Caco-2 (cell line): ENCODE measurements at regions of chr5 and their contacts with region 1.

Region 1: GRCh38 chr5:151002250-151002649 is 18.1 kb upstream of the GPX3 start:
- DNase-seq: peak in 1 of 2 experiments; percentile 44
- H3K4me3 ChIP-seq: no peak overlapping the region
- H3K4me3 Mint-ChIP-seq: no peak overlapping the region
- H3K27ac Mint-ChIP-seq: no peak overlapping the region
- H3K4me1 ChIP-seq: peaks cover 10% of the 10 kb centered on the region
- H3K4me1 Mint-ChIP-seq: peaks cover 14% of the 10 kb centered on the region
- H3K27me3 ChIP-seq: no peaks in the 10 kb centered on the region
- H3K27me3 Mint-ChIP-seq: no peaks in the 10 kb centered on the region
- CTCF ChIP-seq: peak; percentile 45 to 56

Region 2: GRCh38 chr5:150560401-150561193 is 441.7 kb before region 1 on chr5:
- CTCF ChIA-PET with region 1: no interaction called
- POLR2A ChIA-PET with region 1: no interaction called
- intact Hi-C with region 1: no loop called
- DNase-seq: peak; percentile 88 to 92
- H3K4me3 ChIP-seq: no peak overlapping the region
- H3K4me3 Mint-ChIP-seq: peak overlapping the region; percentile 53
- H3K27ac Mint-ChIP-seq: peak overlapping the region; percentile 78
- H3K4me1 ChIP-seq: peaks cover 21% of the 10 kb centered on the region
- H3K4me1 Mint-ChIP-seq: peaks cover 25% of the 10 kb centered on the region
- H3K27me3 ChIP-seq: no peaks in the 10 kb centered on the region
- H3K27me3 Mint-ChIP-seq: no peaks in the 10 kb centered on the region
- CTCF ChIP-seq: peak; percentile 83 to 93

Region 3: DNA sequence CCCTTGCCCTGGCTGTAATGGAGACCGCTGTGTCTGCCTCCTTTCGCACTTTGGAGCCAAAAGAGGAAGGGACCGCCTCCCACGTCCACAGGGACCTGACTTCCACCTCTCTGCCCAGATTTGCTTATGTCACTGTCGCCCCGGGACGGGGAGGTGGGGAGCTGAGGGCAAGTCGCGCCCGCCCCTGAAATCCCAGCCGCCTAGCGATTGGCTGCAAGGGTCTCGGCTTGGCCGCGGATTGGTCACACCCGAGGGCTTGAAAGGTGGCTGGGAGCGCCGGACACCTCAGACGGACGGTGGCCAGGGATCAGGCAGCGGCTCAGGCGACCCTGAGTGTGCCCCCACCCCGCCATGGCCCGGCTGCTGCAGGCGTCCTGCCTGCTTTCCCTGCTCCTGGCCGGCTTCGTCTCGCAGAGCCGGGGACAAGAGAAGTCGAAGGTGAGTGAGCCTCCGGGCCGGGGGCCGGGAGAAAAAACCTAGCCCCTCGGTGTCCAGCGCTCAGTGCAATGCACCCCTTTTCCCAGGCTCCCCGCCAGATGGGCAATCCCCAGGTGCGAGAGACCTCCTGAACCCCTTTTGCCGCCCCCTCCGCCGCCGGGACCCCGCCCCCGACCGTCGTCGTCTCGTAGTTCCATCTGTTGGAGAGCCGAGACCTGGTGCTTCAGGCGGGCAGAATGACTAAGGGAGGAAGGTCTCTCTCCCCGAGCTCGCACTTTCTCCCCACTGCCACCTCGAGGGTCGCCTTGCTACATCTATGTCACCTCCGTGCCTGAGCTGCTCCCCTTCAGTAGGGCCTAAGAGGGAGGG is 18.3 kb after region 1 on chr5 and contains the start of gene GPX3:
- CTCF ChIA-PET with region 1: interaction called, 5 read pairs
- POLR2A ChIA-PET with region 1: interaction called, 3 read pairs
- intact Hi-C with region 1: loop called (anchors 2 kb)
- DNase-seq: peak; percentile 96 to 97
- H3K4me3 ChIP-seq: peak within 1 kb of the TSS; percentile 79
- H3K4me3 Mint-ChIP-seq: peak within 1 kb of the TSS; percentile 81
- H3K27ac Mint-ChIP-seq: peak within 1 kb of the TSS; percentile 57
- H3K4me1 ChIP-seq: peaks cover 17% of the 10 kb centered on the region
- H3K4me1 Mint-ChIP-seq: peaks cover 13% of the 10 kb centered on the region
- H3K27me3 ChIP-seq: no peaks in the 10 kb centered on the region
- H3K27me3 Mint-ChIP-seq: no peaks in the 10 kb centered on the region
- CTCF ChIP-seq: no peak
- total RNA-seq, gene GPX3: 80.6 and 86.6 TPM in 2 replicates

Region 4: DNA sequence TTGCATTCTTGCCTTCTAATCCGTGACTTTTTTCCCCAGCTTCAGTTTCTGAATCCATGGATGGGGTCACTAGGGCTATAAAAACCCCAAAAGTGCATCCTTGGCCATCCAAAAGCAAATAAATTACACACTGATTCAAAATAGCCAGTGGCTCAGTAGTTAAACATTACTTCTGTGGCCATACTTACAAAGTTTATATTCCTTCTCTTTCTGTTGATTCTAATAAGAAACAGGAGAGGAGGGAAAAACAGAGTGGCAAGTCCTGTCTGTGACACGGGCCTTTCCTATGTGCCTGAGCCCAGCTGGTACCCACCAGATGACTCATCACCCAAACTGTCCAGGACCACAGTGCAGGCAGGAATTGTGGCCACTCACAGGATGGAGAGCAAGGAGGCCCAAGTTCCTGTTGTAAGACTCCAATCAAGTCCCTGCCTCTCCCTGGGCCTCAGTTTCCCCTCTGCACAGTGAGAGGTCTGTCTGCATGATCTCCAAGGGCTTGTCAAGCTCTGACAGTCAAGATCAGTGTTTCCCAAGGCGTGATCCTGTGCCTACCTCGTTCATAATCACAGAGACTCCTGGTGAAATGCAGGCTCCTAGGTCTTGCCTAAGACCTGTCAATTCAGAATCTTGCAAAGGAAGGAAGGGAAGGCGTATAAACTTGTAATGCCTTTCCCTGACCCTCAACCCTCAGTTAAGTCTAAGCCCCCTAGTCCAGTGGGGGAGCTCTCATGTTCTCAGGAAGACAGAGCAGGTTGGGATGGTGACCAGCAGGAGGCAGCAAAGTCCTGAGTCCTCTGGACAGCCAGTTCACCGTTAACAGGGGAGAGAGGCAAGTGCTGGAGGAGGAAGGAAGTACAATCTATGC is 49.0 kb after region 1 on chr5:
- CTCF ChIA-PET with region 1: interaction called, 14 read pairs
- POLR2A ChIA-PET with region 1: no interaction called
- intact Hi-C with region 1: loop called (anchors 1 kb)
- DNase-seq: peak; percentile 72 to 78
- H3K4me3 ChIP-seq: no peak overlapping the region
- H3K4me3 Mint-ChIP-seq: no peak overlapping the region
- H3K27ac Mint-ChIP-seq: peak overlapping the region; percentile 53
- H3K4me1 ChIP-seq: peaks cover 6% of the 10 kb centered on the region; the same call in 1 of the 2 replicates
- H3K4me1 Mint-ChIP-seq: peaks cover 10% of the 10 kb centered on the region
- H3K27me3 ChIP-seq: no peaks in the 10 kb centered on the region
- H3K27me3 Mint-ChIP-seq: no peaks in the 10 kb centered on the region
- CTCF ChIP-seq: peak; percentile 81 to 89

Region 5: GRCh38 chr5:151164686-151165392 is 162.6 kb after region 1 on chr5:
- CTCF ChIA-PET with region 1: interaction called, 12 read pairs
- POLR2A ChIA-PET with region 1: interaction called, 3 read pairs
- intact Hi-C with region 1: loop called (anchors 1 kb)
- DNase-seq: peak; percentile 74 to 85
- H3K4me3 ChIP-seq: no peak overlapping the region
- H3K4me3 Mint-ChIP-seq: no peak overlapping the region
- H3K27ac Mint-ChIP-seq: no peak overlapping the region
- H3K4me1 ChIP-seq: no peaks in the 10 kb centered on the region
- H3K4me1 Mint-ChIP-seq: no peaks in the 10 kb centered on the region
- H3K27me3 ChIP-seq: no peaks in the 10 kb centered on the region
- H3K27me3 Mint-ChIP-seq: no peaks in the 10 kb centered on the region
- CTCF ChIP-seq: peak; percentile 67 to 92